BJ (cell line): ENCODE measurements at regions of chr7 and their contacts with region 1.

Region 1: GRCh38 chr7:19989906-19990305 is 216.5 kb upstream of the TMEM196 start:
- DNase-seq: no peak
- H3K4me3 ChIP-seq: no peak overlapping the region
- H3K27me3 ChIP-seq: no peaks in the 10 kb centered on the region
- CTCF ChIP-seq: no peak

Region 2: GRCh38 chr7:19969859-19970498 is 19.9 kb before region 1 on chr7:
- CTCF ChIA-PET with region 1: no interaction called
- POLR2A ChIA-PET with region 1: no interaction called
- DNase-seq: no peak
- H3K4me3 ChIP-seq: no peak overlapping the region
- H3K27me3 ChIP-seq: no peaks in the 10 kb centered on the region
- CTCF ChIP-seq: no peak

Region 3: GRCh38 chr7:20201380-20201779 is 211.5 kb after region 1 on chr7:
- CTCF ChIA-PET with region 1: no interaction called
- POLR2A ChIA-PET with region 1: interaction called, 12 read pairs
- DNase-seq: no peak
- H3K4me3 ChIP-seq: no peak overlapping the region
- H3K27me3 ChIP-seq: no peaks in the 10 kb centered on the region
- CTCF ChIP-seq: no peak